Head of caudate nucleus (tissue), 42 donors: ENCODE measurements at regions of chr3 and their contacts with region 1.

Region 1: GRCh38 chr3:184135149-184135910 is at the start of gene EIF2B5:
- DNase-seq: peak; percentile 87 to 98 (median 95)

Region 2: DNA sequence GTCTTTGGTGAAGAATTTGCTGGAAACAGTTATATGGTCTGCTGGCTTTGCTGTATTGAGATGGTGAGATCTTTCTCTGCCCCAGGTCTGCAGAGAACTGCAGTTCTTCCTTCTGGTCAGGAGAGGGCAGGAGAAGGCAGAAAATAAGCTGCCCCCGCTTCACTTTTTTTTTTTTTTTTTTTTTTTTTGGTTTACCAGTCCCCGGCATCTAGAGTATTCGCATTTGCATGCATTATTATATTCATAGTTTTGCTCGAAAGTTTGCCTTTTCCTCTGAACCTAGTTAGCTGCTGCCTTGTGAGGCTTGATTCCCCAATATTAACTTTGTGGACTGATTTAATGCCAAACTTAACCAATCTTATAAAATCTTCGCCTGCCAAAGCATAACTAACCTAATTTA is 240.0 kb before region 1 on chr3:
- intact Hi-C with region 1: loop called (anchors 10 kb)
- DNase-seq: peak in 23 of 42 donors; percentile 9 to 68 (median 40)

Region 3: DNA sequence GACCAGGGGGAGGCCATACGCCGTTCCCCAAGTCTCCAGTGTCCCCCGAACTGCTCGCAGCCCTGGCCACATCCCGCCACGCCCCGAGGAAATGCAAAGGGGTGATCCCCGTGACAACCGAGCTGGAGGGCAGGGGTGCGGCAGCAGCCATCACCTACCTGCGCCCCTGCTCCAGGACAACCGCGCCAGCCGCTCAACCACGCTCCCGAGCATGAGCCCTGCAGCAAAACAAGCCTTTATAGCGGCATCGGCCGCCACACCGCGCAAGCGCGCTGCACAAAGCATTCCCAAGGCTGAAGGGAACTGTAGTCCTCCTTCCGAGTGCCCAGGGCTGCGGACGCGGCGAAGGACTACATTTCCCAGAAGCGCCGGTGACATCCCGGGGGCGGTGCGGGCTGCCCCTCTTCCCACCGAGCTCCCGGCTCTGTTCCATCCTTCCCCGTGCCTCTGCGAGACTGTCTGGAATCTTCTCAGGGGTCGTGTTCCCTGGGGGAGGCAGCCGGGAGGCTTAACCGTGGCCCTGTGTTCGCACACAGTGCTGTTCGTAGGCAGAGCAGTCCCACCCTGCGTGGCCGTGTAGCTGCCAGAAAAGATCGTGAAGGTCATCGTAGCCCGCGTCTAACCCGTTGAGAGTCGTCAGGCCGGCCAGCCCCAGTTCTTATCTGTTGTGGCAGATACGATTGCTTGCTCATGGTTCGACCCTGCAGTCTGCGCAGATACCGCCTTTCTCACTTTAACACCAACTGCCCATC is 117.5 kb before region 1 on chr3 and contains the start of gene ABCC5:
- intact Hi-C with region 1: loop called (anchors 10 kb)
- DNase-seq: peak; percentile 91 to 99 (median 97)

Region 4: DNA sequence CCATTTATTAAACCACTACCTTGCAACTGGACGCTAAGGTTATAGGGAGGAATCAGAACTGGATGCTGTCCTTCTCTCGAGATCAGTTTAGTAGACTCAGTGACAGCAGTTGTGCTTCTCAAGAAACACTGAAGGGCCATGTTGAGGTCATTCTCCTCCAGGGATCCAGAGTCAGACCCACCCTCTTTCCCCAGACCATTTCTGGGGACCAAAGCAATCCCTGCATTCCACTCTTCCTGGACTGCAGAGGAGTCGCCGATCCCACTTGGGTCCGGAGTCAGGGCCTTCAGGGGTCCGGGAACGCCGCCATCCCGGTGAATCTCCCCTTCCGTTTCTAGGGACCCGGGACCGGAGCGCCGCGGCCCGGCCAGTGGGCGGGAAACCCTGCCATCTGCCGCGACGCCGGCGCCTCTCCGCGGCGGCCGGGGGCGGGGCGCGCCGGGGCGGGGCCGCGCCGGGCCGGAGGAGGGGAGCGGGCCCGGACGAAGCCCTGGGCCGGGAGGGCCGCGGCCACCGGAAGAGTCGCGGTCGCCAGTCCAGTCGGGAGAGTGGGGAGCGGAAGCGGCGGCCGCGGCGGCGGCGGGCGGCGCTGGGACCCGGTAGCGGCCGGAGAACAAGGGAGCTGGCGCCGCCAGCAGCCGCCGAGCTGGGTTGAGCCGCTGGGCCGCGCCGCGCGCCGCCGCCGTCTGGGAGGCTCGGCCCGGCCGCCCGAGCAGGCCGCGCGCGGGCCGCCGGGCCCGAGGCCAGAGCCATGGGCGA is 19.7 kb after region 1 on chr3 and contains the start of gene DVL3:
- intact Hi-C with region 1: loop called (anchors 2 kb)
- DNase-seq: peak in 41 of 42 donors; percentile 36 to 87 (median 72)

Region 5: GRCh38 chr3:184174646-184175492 is 39.5 kb after region 1 on chr3 and contains the start of gene AP2M1:
- intact Hi-C with region 1: loop called (anchors 5 kb)
- DNase-seq: peak; percentile 97 to 100 (median 99)

Region 6: DNA sequence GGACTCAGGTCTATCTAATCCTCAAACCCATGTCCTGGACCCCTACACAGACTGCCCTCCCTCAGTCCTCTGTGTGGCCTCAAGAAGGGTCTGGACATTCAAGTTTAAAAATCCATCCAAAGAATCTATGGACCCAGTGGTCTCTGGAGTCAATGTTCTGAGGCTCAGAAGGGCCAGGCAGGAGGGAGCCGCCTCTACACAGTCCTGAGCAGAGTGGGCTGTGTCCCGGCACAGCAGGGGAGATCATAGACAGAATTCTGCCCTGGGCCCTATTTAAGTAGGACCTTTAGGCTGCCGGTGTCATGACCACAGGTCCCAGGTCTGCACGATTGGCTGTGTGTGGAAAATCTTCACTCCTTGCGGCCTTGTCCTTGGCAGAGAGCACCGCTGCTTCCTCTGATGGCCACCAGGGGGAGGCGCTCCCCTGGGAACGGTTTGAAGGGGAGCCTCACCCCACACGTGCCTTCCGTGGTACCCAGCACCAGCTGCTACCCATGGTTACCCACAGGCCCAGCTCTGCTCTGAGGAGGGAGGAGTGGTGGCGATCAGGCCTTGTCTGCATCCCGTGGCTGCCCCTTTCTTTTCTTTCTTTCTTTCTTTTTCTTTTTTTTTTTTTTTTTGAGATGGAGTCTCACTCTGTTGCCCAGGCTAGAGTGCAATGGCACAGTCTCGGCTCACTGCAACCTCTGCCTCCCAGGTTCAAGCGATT is 282.4 kb after region 1 on chr3:
- intact Hi-C with region 1: no loop called
- DNase-seq: peak; percentile 35 to 87 (median 70)